Heart left ventricle (tissue), 16 donors: ENCODE measurements at regions of chr2 and their contacts with region 1.

Region 1: GRCh38 chr2:114550895-114551793 is 108.7 kb downstream of the DPP10 start:
- DNase-seq: peak in 3 of 5 donors; percentile 17 to 29 (median 29)
- ATAC-seq: peak in 3 of 4 donors; percentile 55 to 62 (median 61)
- H3K4me3 ChIP-seq: no peak overlapping the region
- H3K27ac ChIP-seq: no peak overlapping the region
- H3K4me1 ChIP-seq: no peaks in the 10 kb centered on the region
- H3K27me3 ChIP-seq: peaks cover 0 to 26% (median 0%) of the 10 kb centered on the region in 9 donors
- CTCF ChIP-seq: peak; percentile 32 to 71 (median 56)
- POLR2A ChIP-seq: no peak

Region 2: DNA sequence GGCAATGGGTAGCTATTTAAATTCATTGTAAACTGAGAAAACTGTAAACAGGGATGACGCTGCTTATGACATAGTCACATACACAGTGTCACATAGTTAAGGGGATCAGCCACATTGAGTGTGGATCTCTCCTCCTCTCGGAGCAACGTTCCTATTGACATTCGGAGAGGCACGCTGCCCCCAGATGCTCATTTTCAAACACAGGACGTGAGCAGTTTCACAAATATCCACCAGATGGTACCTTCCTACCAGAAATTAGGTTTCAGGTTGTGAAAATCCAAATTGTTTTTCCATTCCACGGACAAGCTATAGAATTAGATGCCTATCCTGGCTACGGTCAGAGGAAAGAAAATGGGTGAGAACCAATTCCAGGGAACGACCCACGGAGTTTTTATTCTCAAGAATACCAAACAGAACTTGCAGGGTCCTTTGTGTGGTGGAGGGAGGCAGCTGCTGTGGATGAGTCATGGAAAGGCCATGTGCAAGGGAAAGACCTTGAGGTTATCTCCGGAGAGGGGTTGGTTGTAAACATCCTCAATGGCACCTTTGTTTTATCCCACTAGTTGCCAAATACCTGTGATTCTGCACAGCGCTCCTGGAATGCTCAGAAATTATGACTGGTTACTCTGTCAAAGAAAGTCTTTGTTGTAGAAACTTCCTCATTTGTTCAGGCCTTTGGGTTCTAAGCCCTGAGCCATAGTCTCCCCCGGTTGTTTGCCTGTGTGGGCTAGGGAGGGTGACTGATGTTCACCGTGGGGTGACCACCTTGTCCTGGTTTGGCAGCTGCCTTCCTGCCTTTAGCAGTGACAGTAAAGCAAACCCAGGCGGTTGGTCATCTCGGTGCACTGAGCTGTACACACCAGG is 573.3 kb before region 1 on chr2:
- intact Hi-C with region 1: loop called in 9 of 10 experiments (anchors 5 to 10 kb)
- DNase-seq: no peak
- ATAC-seq: no peak
- H3K4me3 ChIP-seq: no peak overlapping the region
- H3K27ac ChIP-seq: no peak overlapping the region
- H3K4me1 ChIP-seq: peaks cover 0 to 11% (median 0%) of the 10 kb centered on the region in 12 donors
- H3K27me3 ChIP-seq: no peaks in the 10 kb centered on the region
- CTCF ChIP-seq: peak in 9 of 12 donors; percentile 8 to 51 (median 31)
- POLR2A ChIP-seq: no peak

Region 3: GRCh38 chr2:114598329-114598728 is 47.2 kb after region 1 on chr2:
- intact Hi-C with region 1: loop called in 1 of 10 experiments (anchors 5 kb)
- DNase-seq: no peak
- ATAC-seq: no peak
- H3K4me3 ChIP-seq: no peak overlapping the region
- H3K27ac ChIP-seq: no peak overlapping the region
- H3K4me1 ChIP-seq: no peaks in the 10 kb centered on the region
- H3K27me3 ChIP-seq: no peaks in the 10 kb centered on the region
- CTCF ChIP-seq: no peak
- POLR2A ChIP-seq: no peak